Activated B cell treated with CpG ODN at 0.5 μM for 24 hours (primary cell): ENCODE measurements at regions of chr10 and their contacts with region 1.

Region 1: GRCh38 chr10:92757066-92757710 is 67.4 kb downstream of the HHEX start:
- DNase-seq: peak; percentile 47
- ATAC-seq: peak; percentile 62
- H3K4me3 Mint-ChIP-seq: peak overlapping the region; percentile 76
- H3K27ac Mint-ChIP-seq: peak overlapping the region; percentile 96
- H3K4me1 Mint-ChIP-seq: peaks cover 83% of the 10 kb centered on the region
- H3K27me3 Mint-ChIP-seq: no peaks in the 10 kb centered on the region
- CTCF ChIP-seq: no peak

Region 2: GRCh38 chr10:92712016-92712889 is 44.9 kb before region 1 on chr10:
- CTCF ChIA-PET with region 1: no interaction called
- POLR2A ChIA-PET with region 1: interaction called, 13 read pairs
- intact Hi-C with region 1: loop called (anchors 1 kb)
- DNase-seq: no peak
- ATAC-seq: peak; percentile 74
- H3K4me3 Mint-ChIP-seq: peak overlapping the region; percentile 60
- H3K27ac Mint-ChIP-seq: peak overlapping the region; percentile 85
- H3K4me1 Mint-ChIP-seq: peaks cover 65% of the 10 kb centered on the region
- H3K27me3 Mint-ChIP-seq: no peaks in the 10 kb centered on the region
- CTCF ChIP-seq: no peak

Region 3: GRCh38 chr10:92742331-92743228 is 14.6 kb before region 1 on chr10:
- CTCF ChIA-PET with region 1: interaction called, 13 read pairs
- POLR2A ChIA-PET with region 1: interaction called, 58 read pairs
- intact Hi-C with region 1: loop called (anchors 1 kb)
- DNase-seq: peak; percentile 30
- ATAC-seq: peak; percentile 95
- H3K4me3 Mint-ChIP-seq: peak overlapping the region; percentile 78
- H3K27ac Mint-ChIP-seq: peak overlapping the region; percentile 95
- H3K4me1 Mint-ChIP-seq: peaks cover 79% of the 10 kb centered on the region
- H3K27me3 Mint-ChIP-seq: no peaks in the 10 kb centered on the region
- CTCF ChIP-seq: no peak

Region 4: DNA sequence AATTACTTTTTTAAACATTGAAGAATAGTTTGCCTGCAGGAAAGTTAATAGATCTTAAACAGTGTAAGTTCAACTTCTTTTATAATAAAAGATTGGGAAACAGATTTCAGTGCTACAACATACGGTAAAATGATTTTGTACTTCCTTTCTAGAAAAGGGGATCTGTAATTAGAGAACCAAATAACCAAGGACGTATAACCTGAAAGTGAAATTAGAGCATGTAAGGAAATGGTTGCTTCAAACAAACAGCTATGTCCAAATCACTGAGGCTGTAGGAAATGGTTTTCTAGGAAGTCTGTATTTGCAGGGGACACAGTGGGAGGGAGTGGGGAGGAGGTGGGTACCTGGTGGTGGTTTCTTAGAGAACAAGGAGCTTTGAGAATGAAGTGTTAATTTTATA is 33.3 kb after region 1 on chr10:
- CTCF ChIA-PET with region 1: interaction called, 11 read pairs
- POLR2A ChIA-PET with region 1: interaction called, 14 read pairs
- intact Hi-C with region 1: loop called (anchors 1 kb)
- DNase-seq: no peak
- ATAC-seq: peak; percentile 47
- H3K4me3 Mint-ChIP-seq: peak overlapping the region; percentile 63
- H3K27ac Mint-ChIP-seq: peak overlapping the region; percentile 92
- H3K4me1 Mint-ChIP-seq: peaks cover 45% of the 10 kb centered on the region
- H3K27me3 Mint-ChIP-seq: no peaks in the 10 kb centered on the region
- CTCF ChIP-seq: no peak

Region 5: GRCh38 chr10:92848441-92849233 is 91.4 kb after region 1 on chr10 and contains the start of gene EXOC6:
- CTCF ChIA-PET with region 1: interaction called, 4 read pairs
- POLR2A ChIA-PET with region 1: interaction called, 34 read pairs
- intact Hi-C with region 1: loop called (anchors 1 kb)
- DNase-seq: peak; percentile 89
- ATAC-seq: peak; percentile 84
- H3K4me3 Mint-ChIP-seq: peak within 1 kb of the TSS; percentile 87
- H3K27ac Mint-ChIP-seq: peak within 1 kb of the TSS; percentile 87
- H3K4me1 Mint-ChIP-seq: peaks cover 34% of the 10 kb centered on the region
- H3K27me3 Mint-ChIP-seq: no peaks in the 10 kb centered on the region
- CTCF ChIP-seq: no peak
- total RNA-seq, gene EXOC6: 15.3 and 17.3 TPM in 2 replicates